ENCODE measurements at regions of chr7 and their contacts with region 1.

Region 1: DNA sequence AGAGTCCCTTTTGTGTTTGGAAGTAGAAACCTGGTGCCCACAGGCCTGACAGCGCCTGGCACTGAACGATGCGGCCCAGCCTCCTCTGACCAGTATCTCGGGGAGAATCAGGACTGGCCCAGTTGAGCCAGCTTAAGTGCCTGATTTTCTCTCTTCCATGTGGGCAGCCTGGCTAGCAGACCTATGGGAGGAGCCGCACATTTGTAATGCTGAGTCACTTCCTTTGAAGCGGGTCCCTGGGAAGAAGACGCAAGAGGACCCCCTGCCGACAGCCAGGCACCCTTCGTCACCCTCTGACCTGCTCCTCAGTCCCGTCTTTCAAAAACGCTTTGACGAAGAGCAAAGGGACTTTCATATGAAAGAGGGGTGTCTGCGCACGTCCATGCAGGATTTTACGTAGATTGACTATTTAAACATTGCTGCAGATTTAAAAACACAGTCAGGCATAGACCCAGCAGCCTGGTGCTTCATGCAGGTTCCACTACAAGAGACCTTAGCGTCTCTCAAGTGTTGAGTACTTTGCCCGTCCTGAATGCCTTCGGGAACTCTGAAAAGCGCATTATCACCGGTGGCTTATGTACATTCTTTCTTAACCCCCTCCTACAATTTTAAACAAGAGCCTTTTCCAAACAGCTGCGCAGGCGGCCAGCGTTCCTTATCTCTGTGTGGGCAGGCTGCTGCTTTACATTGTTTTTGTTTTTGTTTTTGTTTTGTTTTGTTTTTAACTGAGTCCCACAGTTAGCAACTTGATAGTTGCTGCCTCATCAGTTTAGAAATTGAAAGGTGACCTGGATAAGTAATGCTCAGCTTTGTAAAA is 36.5 kb upstream of the AP5Z1 start:
- DNase-seq: peak; percentile 91 to 98
- ATAC-seq: peak; percentile 87 to 88
- H3K4me3 ChIP-seq: peak overlapping the region; percentile 23; the same call in 2 of the 3 replicates
- H3K27ac ChIP-seq: peak overlapping the region; percentile 96 to 99
- H3K4me1 ChIP-seq: peaks cover 65% of the 10 kb centered on the region
- CTCF ChIP-seq: no peak
- EP300 ChIP-seq: peak; percentile 90 to 96; a peak in 4 of 5 replicates
- POLR2A ChIP-seq: 0 out of 2 replicates have a peak, but pooled peaks have one; percentile 9
- RAD21 ChIP-seq: peak; percentile 38 to 55

Region 2: GRCh38 chr7:4725014-4725849 is 13.7 kb before region 1 on chr7:
- CTCF ChIA-PET with region 1: interaction called, 20 read pairs
- POLR2A ChIA-PET with region 1: interaction called, 5 read pairs
- DNase-seq: peak; percentile 71 to 72
- ATAC-seq: peak; percentile 81 to 83
- H3K4me3 ChIP-seq: peak overlapping the region; percentile 43
- H3K27ac ChIP-seq: peak overlapping the region; percentile 80 to 96
- H3K4me1 ChIP-seq: peaks cover 19% of the 10 kb centered on the region
- CTCF ChIP-seq: peak; percentile 10; the same call in 1 of the 3 replicates
- EP300 ChIP-seq: no peak
- POLR2A ChIP-seq: no peak; the same call in 1 of the 2 replicates
- RAD21 ChIP-seq: no peak; a peak in 1 of 5 replicates

Region 3: GRCh38 chr7:4753711-4754432 is 15.0 kb after region 1 on chr7:
- CTCF ChIA-PET with region 1: interaction called, 46 read pairs
- POLR2A ChIA-PET with region 1: no interaction called
- DNase-seq: peak; percentile 82 to 90
- ATAC-seq: peak; percentile 94 to 97
- H3K4me3 ChIP-seq: no peak overlapping the region
- H3K27ac ChIP-seq: peak overlapping the region; percentile 57 to 79
- H3K4me1 ChIP-seq: peaks cover 12% of the 10 kb centered on the region
- CTCF ChIP-seq: peak; percentile 90
- EP300 ChIP-seq: no peak
- POLR2A ChIP-seq: no peak
- RAD21 ChIP-seq: peak; percentile 93 to 94